Caco-2 (cell line): ENCODE measurements at regions of chr2 and their contacts with region 1.

Region 1: DNA sequence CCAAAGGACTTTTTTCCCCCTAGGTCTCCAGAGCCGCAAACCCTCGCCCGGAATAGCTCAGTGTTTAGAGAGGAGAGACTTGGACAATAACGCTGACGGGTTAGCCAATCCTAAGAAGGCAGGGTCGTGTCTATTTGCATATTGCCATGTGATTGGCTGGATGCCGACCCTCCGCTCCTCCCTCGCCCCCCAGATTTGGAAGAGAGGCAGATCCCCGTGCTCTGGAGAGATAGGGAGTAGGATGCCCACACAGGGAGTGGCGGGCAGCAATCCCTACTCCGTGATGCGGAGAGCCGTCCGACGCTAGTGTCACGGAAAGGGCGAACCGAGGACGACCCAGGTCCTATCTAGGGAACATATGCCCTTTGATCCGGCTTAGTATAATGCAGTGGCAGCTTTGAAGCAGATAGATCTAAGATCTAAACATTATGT is 1.4 kb downstream of the WNT6 start:
- DNase-seq: peak; percentile 88 to 93
- H3K4me3 ChIP-seq: peak overlapping the region; percentile 43
- H3K4me3 Mint-ChIP-seq: peak overlapping the region; percentile 76
- H3K27ac Mint-ChIP-seq: no peak overlapping the region
- H3K4me1 ChIP-seq: peaks cover 43% of the 10 kb centered on the region
- H3K4me1 Mint-ChIP-seq: peaks cover 32% of the 10 kb centered on the region
- H3K27me3 ChIP-seq: peaks cover 6% of the 10 kb centered on the region
- H3K27me3 Mint-ChIP-seq: peaks cover 8% of the 10 kb centered on the region
- CTCF ChIP-seq: no peak

Region 2: DNA sequence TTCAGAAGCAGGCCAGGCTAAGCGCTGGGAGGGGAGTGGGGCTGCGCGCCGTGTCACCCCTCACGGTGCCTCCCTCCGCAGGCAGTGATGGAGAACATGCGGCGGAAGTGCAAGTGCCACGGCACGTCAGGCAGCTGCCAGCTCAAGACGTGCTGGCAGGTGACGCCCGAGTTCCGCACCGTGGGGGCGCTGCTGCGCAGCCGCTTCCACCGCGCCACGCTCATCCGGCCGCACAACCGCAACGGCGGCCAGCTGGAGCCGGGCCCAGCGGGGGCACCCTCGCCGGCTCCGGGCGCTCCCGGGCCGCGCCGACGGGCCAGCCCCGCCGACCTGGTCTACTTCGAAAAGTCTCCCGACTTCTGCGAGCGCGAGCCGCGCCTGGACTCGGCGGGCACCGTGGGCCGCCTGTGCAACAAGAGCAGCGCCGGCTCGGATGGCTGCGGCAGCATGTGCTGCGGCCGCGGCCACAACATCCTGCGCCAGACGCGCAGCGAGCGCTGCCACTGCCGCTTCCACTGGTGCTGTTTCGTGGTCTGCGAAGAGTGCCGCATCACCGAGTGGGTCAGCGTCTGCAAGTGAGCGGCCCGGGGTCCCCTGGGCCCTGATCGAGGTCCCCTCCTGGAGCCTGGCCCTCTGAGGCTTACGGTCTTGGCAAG is 31.9 kb after region 1 on chr2:
- CTCF ChIA-PET with region 1: interaction called, 26 read pairs
- POLR2A ChIA-PET with region 1: interaction called, 4 read pairs
- intact Hi-C with region 1: no loop called
- DNase-seq: peak; percentile 69 to 83
- H3K4me3 ChIP-seq: peak overlapping the region; percentile 38
- H3K4me3 Mint-ChIP-seq: peak overlapping the region; percentile 66
- H3K27ac Mint-ChIP-seq: no peak overlapping the region
- H3K4me1 ChIP-seq: peaks cover 41% of the 10 kb centered on the region
- H3K4me1 Mint-ChIP-seq: peaks cover 35% of the 10 kb centered on the region
- H3K27me3 ChIP-seq: no peaks in the 10 kb centered on the region
- H3K27me3 Mint-ChIP-seq: no peaks in the 10 kb centered on the region
- CTCF ChIP-seq: peak; percentile 52 to 81

Region 3: DNA sequence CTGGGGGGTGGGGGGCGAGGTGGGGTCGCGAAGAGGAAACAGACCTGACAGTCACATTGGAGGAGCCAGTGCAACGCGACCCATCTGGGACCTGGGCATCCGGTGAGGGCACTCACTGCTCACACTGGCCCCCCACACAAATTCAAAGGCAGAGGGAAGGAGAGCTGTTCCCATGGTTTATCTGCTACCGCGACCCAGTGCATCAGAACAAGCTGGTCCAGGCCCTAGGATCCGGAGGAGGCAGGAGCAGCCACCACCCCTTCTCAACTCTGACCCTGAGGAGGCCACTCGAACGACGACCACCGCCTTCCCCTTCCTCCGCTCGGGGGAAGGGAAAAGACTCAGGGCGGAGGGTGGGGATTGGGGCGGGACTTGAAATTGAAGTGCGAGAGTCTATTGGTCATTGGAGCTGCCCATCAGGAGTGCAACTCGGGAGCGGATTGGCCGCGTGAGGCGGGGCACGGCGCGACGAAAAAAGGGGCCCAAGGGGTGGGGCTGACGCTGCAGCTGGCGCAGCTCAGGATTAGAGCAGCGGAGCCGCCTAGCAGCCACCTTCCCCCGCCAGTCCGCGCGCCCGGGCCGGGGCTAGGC is 98.3 kb after region 1 on chr2 and contains the start of gene CDK5R2:
- CTCF ChIA-PET with region 1: no interaction called
- POLR2A ChIA-PET with region 1: no interaction called
- intact Hi-C with region 1: loop called (anchors 5 kb)
- DNase-seq: peak; percentile 94
- H3K4me3 ChIP-seq: peak within 1 kb of the TSS; percentile 52
- H3K4me3 Mint-ChIP-seq: peak within 1 kb of the TSS; percentile 76
- H3K27ac Mint-ChIP-seq: no peak within 1 kb of the TSS
- H3K4me1 ChIP-seq: peaks cover 36% of the 10 kb centered on the region
- H3K4me1 Mint-ChIP-seq: peaks cover 16% of the 10 kb centered on the region
- H3K27me3 ChIP-seq: peaks cover 4% of the 10 kb centered on the region
- H3K27me3 Mint-ChIP-seq: peaks cover 32% of the 10 kb centered on the region
- CTCF ChIP-seq: no peak
- total RNA-seq, gene CDK5R2: 0.18 and 0.21 TPM in 2 replicates